ENCODE measurements at regions of chr20 and their contacts with region 1.

Region 1: DNA sequence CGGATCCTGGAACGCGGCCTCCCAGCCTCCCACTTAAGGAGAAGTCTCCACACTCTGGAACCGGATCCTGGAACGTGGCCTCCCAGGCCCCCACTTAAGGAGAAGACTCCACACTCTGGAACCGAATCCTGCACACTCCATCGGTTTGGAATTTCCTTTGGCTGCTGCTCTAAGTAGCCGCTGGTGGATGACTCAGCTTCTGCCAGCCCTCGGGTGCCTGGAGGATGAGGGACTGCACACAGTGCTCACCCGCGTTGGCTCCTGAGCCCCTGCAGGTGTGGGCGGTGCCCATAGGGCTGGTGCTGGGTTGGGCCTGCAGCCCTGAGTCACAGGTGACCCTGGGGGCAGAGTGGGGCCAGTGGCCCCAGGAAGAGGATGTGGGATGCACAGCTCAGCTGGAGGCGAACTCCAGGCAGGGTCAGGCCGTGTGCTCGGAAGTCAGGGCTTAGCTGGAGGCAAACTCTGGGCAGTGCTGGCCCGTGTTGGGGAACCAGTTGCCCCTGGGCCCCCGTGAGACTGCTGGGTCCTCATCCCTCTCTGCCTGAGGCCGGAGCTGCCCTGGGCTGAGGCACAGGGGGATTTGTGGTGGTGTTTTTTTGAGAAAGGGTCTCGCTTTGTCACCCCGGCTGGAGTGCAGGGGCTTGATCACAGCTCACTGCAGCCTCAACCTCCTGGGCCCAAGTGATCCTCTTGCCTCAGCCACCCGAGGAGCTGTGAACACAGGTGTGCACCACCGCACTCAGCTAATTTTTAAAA is 13.9 kb upstream of the TNFRSF6B start:
- DNase-seq: peak; percentile 91
- H3K4me3 ChIP-seq: no peak overlapping the region
- H3K27ac ChIP-seq: peak overlapping the region; percentile 97
- H3K27me3 ChIP-seq: no peaks in the 10 kb centered on the region
- CTCF ChIP-seq: no peak

Region 2: DNA sequence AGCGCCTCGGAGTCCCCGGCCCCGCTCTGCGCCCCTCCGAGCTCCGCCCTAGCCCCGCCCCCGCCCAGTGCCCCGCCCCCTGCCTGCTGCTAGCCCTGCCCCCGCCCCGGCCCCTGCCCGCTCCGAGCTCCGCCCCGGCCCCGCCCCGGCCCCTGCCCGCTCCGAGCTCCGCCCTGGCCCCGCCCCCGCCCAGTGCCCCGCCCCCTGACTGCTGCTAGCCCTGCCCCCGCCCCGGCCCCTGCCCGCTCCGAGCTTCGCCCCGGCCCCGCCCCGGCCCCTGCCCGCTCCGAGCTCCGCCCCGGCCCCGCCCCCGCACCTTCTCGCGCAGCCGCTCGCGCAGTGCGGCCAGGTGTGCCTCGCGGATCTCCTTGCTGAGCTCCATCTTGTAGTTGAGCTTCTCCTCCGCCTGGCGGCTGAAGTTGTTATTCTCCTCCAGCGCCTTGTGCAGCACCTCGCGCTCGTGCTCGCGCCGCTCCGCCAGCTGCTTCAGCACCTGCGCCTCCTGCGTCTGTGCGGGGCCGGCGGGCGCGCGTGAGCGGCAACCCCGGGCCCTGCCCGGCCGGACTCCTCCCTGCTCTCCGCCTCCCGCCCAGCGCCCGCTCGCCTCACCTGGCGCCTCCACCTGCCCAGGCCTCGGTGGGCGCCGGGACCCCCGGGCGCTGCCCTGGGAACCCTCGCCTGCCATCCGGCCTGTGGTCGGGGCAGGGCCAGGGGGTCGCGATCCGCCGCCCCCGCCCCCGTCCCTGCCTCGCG is 40.6 kb before region 1 on chr20:
- CTCF ChIA-PET with region 1: no interaction called
- POLR2A ChIA-PET with region 1: no interaction called
- DNase-seq: no peak
- H3K4me3 ChIP-seq: peak overlapping the region; percentile 55
- H3K27ac ChIP-seq: no peak overlapping the region
- H3K27me3 ChIP-seq: no peaks in the 10 kb centered on the region
- CTCF ChIP-seq: peak; percentile 43

Region 3: DNA sequence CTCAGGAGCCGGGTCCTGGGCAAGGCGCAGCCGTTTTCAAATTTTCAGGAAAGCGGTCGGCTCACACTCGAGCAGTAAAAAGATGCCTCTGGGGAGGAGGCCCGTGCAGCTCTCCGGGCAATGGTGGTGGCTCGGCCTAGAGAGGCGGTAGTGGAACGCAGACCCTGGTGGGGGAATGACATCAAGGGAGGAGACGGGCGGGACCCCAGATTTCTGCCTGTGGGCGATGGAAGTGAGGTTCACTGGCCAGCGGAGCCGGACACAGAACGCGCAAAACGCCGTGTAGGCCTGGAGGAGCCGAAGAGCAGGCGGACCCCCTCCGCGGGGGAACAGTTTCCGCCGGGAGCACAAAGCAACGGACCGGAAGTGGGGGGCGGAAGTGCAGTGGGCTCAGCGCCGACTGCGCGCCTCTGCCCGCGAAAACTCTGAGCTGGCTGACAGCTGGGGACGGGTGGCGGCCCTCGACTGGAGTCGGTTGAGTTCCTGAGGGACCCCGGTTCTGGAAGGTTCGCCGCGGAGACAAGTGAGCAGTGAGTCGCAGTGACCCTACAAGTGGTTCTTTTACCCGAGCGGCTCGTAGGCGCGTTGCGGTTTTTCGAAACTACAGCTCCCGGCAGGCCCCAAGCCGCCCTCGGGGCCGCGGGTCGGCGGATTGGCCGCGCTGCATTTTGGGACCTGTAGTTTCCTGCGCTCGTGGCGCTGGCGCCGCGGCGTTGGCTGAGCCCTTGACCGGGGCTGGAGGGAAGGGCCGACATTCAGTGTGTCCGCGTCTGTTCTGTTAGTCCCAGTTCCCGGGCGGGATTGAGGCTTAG is 24.4 kb before region 1 on chr20 and contains the start of gene RTEL1:
- CTCF ChIA-PET with region 1: no interaction called
- POLR2A ChIA-PET with region 1: interaction called, 14 read pairs
- DNase-seq: peak; percentile 74
- H3K4me3 ChIP-seq: peak within 1 kb of the TSS; percentile 89
- H3K27ac ChIP-seq: peak within 1 kb of the TSS; percentile 81
- H3K27me3 ChIP-seq: no peaks in the 10 kb centered on the region
- CTCF ChIP-seq: no peak
- polyA plus RNA-seq, gene RTEL1: 11.3 and 14.6 TPM in 2 replicates

Region 4: DNA sequence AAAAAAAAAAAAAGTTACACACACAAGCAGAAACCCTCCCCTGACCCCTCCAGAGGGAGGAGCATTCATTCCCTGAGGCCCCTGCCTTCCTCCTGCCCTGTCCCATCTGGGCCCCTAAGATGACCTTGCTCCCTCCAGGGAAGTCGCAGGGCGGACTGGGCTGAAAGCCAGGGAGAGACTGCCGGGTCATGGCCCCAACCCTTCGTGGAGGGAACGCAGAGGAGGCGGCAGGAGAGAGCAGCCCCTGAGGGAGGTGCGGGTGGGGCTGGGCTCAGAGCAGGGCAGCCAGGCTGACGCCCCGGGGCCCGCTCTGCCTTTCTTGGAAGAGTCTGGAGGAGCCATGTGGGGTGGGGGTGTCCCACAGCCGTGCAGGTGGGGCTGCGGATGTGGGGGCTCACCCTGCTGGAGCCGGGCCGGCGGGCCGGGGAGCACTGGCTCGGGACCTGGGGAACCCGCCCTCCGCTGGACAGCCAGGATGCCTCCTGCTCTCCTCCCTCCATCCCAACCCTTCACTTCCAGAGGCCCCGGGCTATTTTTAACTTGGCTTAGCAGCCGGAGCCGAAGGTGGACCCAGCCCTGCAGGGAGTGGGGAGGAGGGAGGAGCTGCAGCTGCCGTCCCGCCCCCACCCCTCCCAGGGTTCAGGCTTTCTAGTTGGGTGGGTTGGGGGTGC is 163.7 kb after region 1 on chr20:
- CTCF ChIA-PET with region 1: no interaction called
- POLR2A ChIA-PET with region 1: no interaction called
- DNase-seq: no peak
- H3K4me3 ChIP-seq: peak overlapping the region; percentile 17; the same call in 1 of the 2 replicates
- H3K27ac ChIP-seq: no peak overlapping the region
- H3K27me3 ChIP-seq: peaks cover 2% of the 10 kb centered on the region
- CTCF ChIP-seq: no peak

Measured in AG04450 (cell line).